WTC11 (cell line): ENCODE measurements at regions of chr11 and their contacts with region 1.

Region 1: GRCh38 chr11:33039274-33040032 is at the start of gene TCP11L1:
- DNase-seq: peak; percentile 94
- ATAC-seq: peak; percentile 89
- H3K4me3 Mint-ChIP-seq: peak within 1 kb of the TSS; percentile 84
- H3K27ac Mint-ChIP-seq: peak within 1 kb of the TSS; percentile 96
- H3K4me1 Mint-ChIP-seq: peaks cover 10% of the 10 kb centered on the region
- H3K27me3 Mint-ChIP-seq: no peaks in the 10 kb centered on the region
- CTCF ChIP-seq: no peak
- total RNA-seq, gene TCP11L1: 16.8 to 19.4 TPM (median 18.5 TPM) in 3 replicates

Region 2: GRCh38 chr11:33015621-33016551 is 23.6 kb before region 1 on chr11 and contains the start of gene DEPDC7:
- CTCF ChIA-PET with region 1: interaction called, 18 read pairs
- POLR2A ChIA-PET with region 1: interaction called, 12 read pairs
- DNase-seq: peak; percentile 94
- ATAC-seq: peak; percentile 93
- H3K4me3 Mint-ChIP-seq: peak within 1 kb of the TSS; percentile 72
- H3K27ac Mint-ChIP-seq: no peak within 1 kb of the TSS
- H3K4me1 Mint-ChIP-seq: peaks cover 18% of the 10 kb centered on the region
- H3K27me3 Mint-ChIP-seq: peaks cover 38% of the 10 kb centered on the region
- CTCF ChIP-seq: no peak
- total RNA-seq, gene DEPDC7: 4.7 to 5.6 TPM (median 5.1 TPM) in 3 replicates

Region 3: GRCh38 chr11:33025339-33025722 is 14.1 kb before region 1 on chr11:
- CTCF ChIA-PET with region 1: no interaction called
- POLR2A ChIA-PET with region 1: interaction called, 11 read pairs
- DNase-seq: no peak
- ATAC-seq: no peak
- H3K4me3 Mint-ChIP-seq: no peak overlapping the region
- H3K27ac Mint-ChIP-seq: no peak overlapping the region
- H3K4me1 Mint-ChIP-seq: peaks cover 18% of the 10 kb centered on the region
- H3K27me3 Mint-ChIP-seq: no peaks in the 10 kb centered on the region
- CTCF ChIP-seq: no peak

Region 4: GRCh38 chr11:33147559-33147958 is 108.1 kb after region 1 on chr11:
- CTCF ChIA-PET with region 1: no interaction called
- POLR2A ChIA-PET with region 1: no interaction called
- DNase-seq: no peak
- ATAC-seq: no peak
- H3K4me3 Mint-ChIP-seq: no peak overlapping the region
- H3K27ac Mint-ChIP-seq: 0 out of 2 replicates have a peak overlapping the region, but pooled peaks have one; percentile 41
- H3K4me1 Mint-ChIP-seq: peaks cover 33% of the 10 kb centered on the region
- H3K27me3 Mint-ChIP-seq: no peaks in the 10 kb centered on the region
- CTCF ChIP-seq: no peak